Endothelial cell of umbilical vein (primary cell): ENCODE measurements at regions of chr13 and their contacts with region 1.

Region 1: GRCh38 chr13:34156841-34157365 is 339.0 kb downstream of the RFC3 start:
- DNase-seq: peak; percentile 99
- H3K4me3 ChIP-seq: peak overlapping the region in 1 of 3 experiments; percentile 44
- H3K27ac ChIP-seq: peak overlapping the region; percentile 95
- H3K4me1 ChIP-seq: peaks cover 68% of the 10 kb centered on the region
- H3K27me3 ChIP-seq: no peaks in the 10 kb centered on the region
- CTCF ChIP-seq: no peak
- POLR2A ChIP-seq: peak; percentile 58

Region 2: GRCh38 chr13:33494596-33495204 is 662.2 kb before region 1 on chr13:
- CTCF ChIA-PET with region 1: no interaction called
- POLR2A ChIA-PET with region 1: no interaction called
- dilution Hi-C with region 1: no loop called
- intact Hi-C with region 1: loop called (anchors 10 kb)
- DNase-seq: peak; percentile 99
- H3K4me3 ChIP-seq: peak overlapping the region in 1 of 3 experiments; percentile 26
- H3K27ac ChIP-seq: peak overlapping the region; percentile 98
- H3K4me1 ChIP-seq: peaks cover 66% of the 10 kb centered on the region
- H3K27me3 ChIP-seq: no peaks in the 10 kb centered on the region
- CTCF ChIP-seq: no peak
- POLR2A ChIP-seq: peak; percentile 71

Region 3: GRCh38 chr13:33874873-33875272 is 282.0 kb before region 1 on chr13:
- CTCF ChIA-PET with region 1: interaction called, 3 read pairs
- POLR2A ChIA-PET with region 1: no interaction called
- dilution Hi-C with region 1: no loop called
- intact Hi-C with region 1: loop called (anchors 1 kb)
- DNase-seq: peak; percentile 17
- H3K4me3 ChIP-seq: no peak overlapping the region
- H3K27ac ChIP-seq: no peak overlapping the region
- H3K4me1 ChIP-seq: peaks cover 17% of the 10 kb centered on the region
- H3K27me3 ChIP-seq: no peaks in the 10 kb centered on the region
- CTCF ChIP-seq: peak in 1 of 2 donors; percentile 9
- POLR2A ChIP-seq: no peak

Region 4: GRCh38 chr13:34044660-34045080 is 112.2 kb before region 1 on chr13:
- CTCF ChIA-PET with region 1: no interaction called
- POLR2A ChIA-PET with region 1: no interaction called
- dilution Hi-C with region 1: no loop called
- intact Hi-C with region 1: loop called (anchors 1 kb)
- DNase-seq: peak; percentile 64
- H3K4me3 ChIP-seq: no peak overlapping the region
- H3K27ac ChIP-seq: peak overlapping the region; percentile 41
- H3K4me1 ChIP-seq: peaks cover 12% of the 10 kb centered on the region
- H3K27me3 ChIP-seq: no peaks in the 10 kb centered on the region
- CTCF ChIP-seq: no peak
- POLR2A ChIP-seq: no peak

Region 5: GRCh38 chr13:34357435-34358232 is 200.7 kb after region 1 on chr13:
- CTCF ChIA-PET with region 1: interaction called, 3 read pairs
- POLR2A ChIA-PET with region 1: interaction called, 4 read pairs
- dilution Hi-C with region 1: no loop called
- intact Hi-C with region 1: loop called (anchors 2 kb)
- DNase-seq: peak; percentile 72
- H3K4me3 ChIP-seq: no peak overlapping the region
- H3K27ac ChIP-seq: peak overlapping the region; percentile 58
- H3K4me1 ChIP-seq: peaks cover 16% of the 10 kb centered on the region
- H3K27me3 ChIP-seq: no peaks in the 10 kb centered on the region
- CTCF ChIP-seq: no peak
- POLR2A ChIP-seq: no peak

Region 6: GRCh38 chr13:35157143-35157755 is 1000.3 kb after region 1 on chr13:
- CTCF ChIA-PET with region 1: no interaction called
- POLR2A ChIA-PET with region 1: no interaction called
- dilution Hi-C with region 1: no loop called
- intact Hi-C with region 1: loop called (anchors 2 kb)
- DNase-seq: peak; percentile 75
- H3K4me3 ChIP-seq: no peak overlapping the region
- H3K27ac ChIP-seq: no peak overlapping the region
- H3K4me1 ChIP-seq: no peaks in the 10 kb centered on the region
- H3K27me3 ChIP-seq: no peaks in the 10 kb centered on the region
- CTCF ChIP-seq: peak; percentile 42 to 45
- POLR2A ChIP-seq: no peak